ENCODE measurements at regions of chr7 and their contacts with region 1.

Region 1: GRCh38 chr7:140517546-140518369 is 38.5 kb upstream of the MKRN1 start:
- DNase-seq: peak; percentile 86
- ATAC-seq: peak; percentile 96
- H3K4me3 ChIP-seq: no peak overlapping the region
- H3K27ac ChIP-seq: no peak overlapping the region
- H3K4me1 ChIP-seq: peaks cover 6 to 12% of the 10 kb centered on the region in 2 experiments; a peak in 3 of 4 replicates
- H3K27me3 ChIP-seq: no peaks in the 10 kb centered on the region
- CTCF ChIP-seq: peak; percentile 76 to 96 (median 90)
- POLR2A ChIP-seq: no peak
- RAD21 ChIP-seq: peak; percentile 99

Region 2: GRCh38 chr7:139673230-139673629 is 844.5 kb before region 1 on chr7:
- CTCF ChIA-PET with region 1: no interaction called
- POLR2A ChIA-PET with region 1: no interaction called
- RAD21 ChIA-PET with region 1: no interaction called
- intact Hi-C with region 1: no loop called
- DNase-seq: no peak
- ATAC-seq: peak; percentile 63
- H3K4me3 ChIP-seq: no peak overlapping the region
- H3K27ac ChIP-seq: peak overlapping the region; percentile 11; the same call in 1 of the 2 replicates
- H3K4me1 ChIP-seq: peaks cover 12 to 55% of the 10 kb centered on the region in 2 experiments
- H3K27me3 ChIP-seq: no peaks in the 10 kb centered on the region
- CTCF ChIP-seq: no peak
- POLR2A ChIP-seq: no peak
- RAD21 ChIP-seq: no peak

Region 3: DNA sequence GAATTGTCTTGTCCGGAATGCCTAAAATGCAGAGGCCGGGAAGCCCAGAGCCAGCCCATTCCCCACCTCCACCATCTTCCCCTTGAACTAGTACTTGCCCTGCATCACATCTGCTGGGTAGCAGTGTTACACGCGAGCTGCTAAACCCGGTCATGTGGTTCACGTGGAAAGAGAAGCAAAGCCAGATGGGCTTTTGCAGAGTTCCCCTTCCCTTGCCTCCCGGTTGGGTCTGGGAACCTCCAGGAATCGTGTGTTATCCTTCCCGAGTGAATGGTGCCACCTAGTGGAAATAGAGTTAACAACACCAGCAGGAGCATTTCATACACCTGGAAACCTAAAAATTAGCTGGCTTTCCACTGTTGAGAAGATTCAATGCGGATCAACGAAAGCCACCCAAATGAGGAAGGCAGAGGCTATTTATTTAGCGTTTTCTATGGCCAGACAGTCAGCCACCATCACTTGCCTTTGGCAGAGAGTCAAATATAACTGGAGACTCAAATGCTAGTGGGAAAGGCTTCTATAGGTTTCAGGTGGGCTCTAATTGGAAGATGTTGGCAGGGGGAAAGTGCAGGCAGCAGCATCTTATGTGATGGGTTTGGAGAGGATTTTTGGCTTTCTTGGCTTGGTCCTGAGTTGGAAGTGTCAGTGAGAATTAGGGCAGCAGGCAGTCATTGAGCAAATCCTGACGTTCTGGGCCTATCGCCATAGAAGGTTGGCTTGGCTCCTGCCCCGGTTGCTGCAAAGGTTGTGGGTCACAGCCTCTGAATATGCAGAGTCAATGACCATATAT is 135.8 kb after region 1 on chr7:
- CTCF ChIA-PET with region 1: interaction called, 60 read pairs
- POLR2A ChIA-PET with region 1: interaction called, 3 read pairs
- RAD21 ChIA-PET with region 1: interaction called, 18 to 22 read pairs
- intact Hi-C with region 1: loop called (anchors 1 kb)
- DNase-seq: peak; percentile 65
- ATAC-seq: peak; percentile 94
- H3K4me3 ChIP-seq: no peak overlapping the region
- H3K27ac ChIP-seq: no peak overlapping the region
- H3K4me1 ChIP-seq: peaks cover 0 to 15% of the 10 kb centered on the region in 2 experiments; a peak in 2 of 4 replicates
- H3K27me3 ChIP-seq: no peaks in the 10 kb centered on the region
- CTCF ChIP-seq: peak; percentile 77 to 95 (median 88)
- POLR2A ChIP-seq: no peak
- RAD21 ChIP-seq: peak; percentile 99

Region 4: DNA sequence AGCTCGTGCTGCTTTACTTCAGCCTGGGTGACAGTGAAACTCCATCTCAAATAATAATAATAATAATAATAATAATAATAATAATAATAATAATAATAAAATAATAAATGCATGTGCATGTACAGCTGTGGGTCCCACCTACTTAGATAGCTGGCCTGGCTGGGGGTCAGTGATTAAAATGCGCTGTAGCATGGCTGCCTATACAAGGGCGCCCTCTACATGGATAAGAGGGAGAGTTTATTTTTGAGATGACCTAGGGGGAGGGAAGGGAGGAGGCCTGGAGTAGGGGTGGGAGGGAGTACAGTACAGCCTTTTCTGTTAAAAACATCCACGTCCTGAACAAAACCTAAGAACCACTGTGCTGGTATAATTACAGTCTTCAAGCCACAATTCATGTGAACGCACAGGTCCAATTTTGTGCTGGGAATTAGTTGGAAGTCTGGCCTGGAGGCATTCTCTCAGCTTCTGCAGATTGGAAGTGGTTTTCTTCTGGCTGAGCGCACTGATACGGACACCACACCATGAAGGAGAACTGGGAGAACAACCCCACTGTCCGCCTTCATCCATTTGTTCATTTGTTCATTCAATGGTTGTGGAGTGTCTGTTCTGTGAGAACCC is 702.6 kb after region 1 on chr7:
- CTCF ChIA-PET with region 1: no interaction called
- POLR2A ChIA-PET with region 1: no interaction called
- RAD21 ChIA-PET with region 1: no interaction called
- intact Hi-C with region 1: loop called (anchors 10 kb)
- DNase-seq: peak; percentile 7
- ATAC-seq: peak; percentile 92
- H3K4me3 ChIP-seq: no peak overlapping the region
- H3K27ac ChIP-seq: no peak overlapping the region
- H3K4me1 ChIP-seq: no peaks in the 10 kb centered on the region
- H3K27me3 ChIP-seq: peaks cover 6% of the 10 kb centered on the region; the same call in 1 of the 2 replicates
- CTCF ChIP-seq: peak; percentile 47 to 55 (median 54); a peak in 5 of 6 replicates
- POLR2A ChIP-seq: no peak
- RAD21 ChIP-seq: peak; percentile 80